ENCODE measurements at regions of chr22 and their contacts with region 1.

Region 1: GRCh38 chr22:40567106-40567505 is 69.4 kb downstream of the MRTFA start:
- DNase-seq: peak; percentile 33
- H3K4me3 ChIP-seq: no peak overlapping the region
- CTCF ChIP-seq: no peak

Region 2: DNA sequence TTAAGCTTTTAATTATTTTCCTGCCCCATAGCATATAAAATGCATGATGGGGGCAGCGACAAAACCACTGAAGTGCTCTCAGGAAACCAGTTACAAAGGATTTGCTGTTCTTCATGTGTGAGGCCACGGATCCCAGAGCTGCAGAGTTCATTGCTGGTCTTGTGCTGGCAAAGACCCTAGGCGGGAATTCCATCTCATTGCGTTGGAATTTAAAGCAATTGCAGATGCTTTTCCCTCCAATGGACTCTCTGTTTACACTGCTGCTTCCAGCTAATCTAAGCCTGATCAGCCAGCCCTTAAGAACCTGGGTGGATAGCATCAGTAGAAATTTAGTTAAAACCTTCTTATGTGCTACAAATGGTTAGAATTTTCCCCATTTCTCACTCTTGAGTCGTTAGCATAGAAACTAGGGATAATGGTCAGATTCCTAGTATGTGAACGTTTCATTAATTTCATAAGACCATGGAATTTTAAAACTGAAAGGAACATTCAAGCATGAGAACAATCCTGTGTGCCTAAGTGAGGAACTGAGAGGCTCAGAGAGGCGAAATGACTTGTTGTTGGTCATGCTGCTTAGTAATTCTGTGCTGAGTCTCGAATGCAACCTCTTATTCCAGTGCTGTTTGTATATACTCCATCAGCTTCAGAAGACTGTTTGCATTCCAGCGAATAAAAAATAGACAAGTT is 256.9 kb before region 1 on chr22:
- in situ Hi-C with region 1: no loop called
- DNase-seq: peak; percentile 86
- H3K4me3 ChIP-seq: no peak overlapping the region
- CTCF ChIP-seq: no peak

Region 3: GRCh38 chr22:40533712-40534378 is 33.3 kb before region 1 on chr22:
- in situ Hi-C with region 1: loop called (anchors 5 kb)
- DNase-seq: no peak
- H3K4me3 ChIP-seq: no peak overlapping the region
- CTCF ChIP-seq: no peak

Measured in astrocyte of the cerebellum (primary cell).